Calu3 (cell line): ENCODE measurements at regions of chr3 and their contacts with region 1.

Region 1: GRCh38 chr3:189324538-189325138 is 152.9 kb downstream of the TPRG1 start:
- DNase-seq: peak; percentile 93
- H3K4me3 Mint-ChIP-seq: peak overlapping the region; percentile 22
- H3K27ac Mint-ChIP-seq: peak overlapping the region; percentile 75
- H3K4me1 Mint-ChIP-seq: peaks cover 54% of the 10 kb centered on the region
- H3K27me3 Mint-ChIP-seq: peaks cover 16% of the 10 kb centered on the region
- CTCF ChIP-seq: no peak

Region 2: DNA sequence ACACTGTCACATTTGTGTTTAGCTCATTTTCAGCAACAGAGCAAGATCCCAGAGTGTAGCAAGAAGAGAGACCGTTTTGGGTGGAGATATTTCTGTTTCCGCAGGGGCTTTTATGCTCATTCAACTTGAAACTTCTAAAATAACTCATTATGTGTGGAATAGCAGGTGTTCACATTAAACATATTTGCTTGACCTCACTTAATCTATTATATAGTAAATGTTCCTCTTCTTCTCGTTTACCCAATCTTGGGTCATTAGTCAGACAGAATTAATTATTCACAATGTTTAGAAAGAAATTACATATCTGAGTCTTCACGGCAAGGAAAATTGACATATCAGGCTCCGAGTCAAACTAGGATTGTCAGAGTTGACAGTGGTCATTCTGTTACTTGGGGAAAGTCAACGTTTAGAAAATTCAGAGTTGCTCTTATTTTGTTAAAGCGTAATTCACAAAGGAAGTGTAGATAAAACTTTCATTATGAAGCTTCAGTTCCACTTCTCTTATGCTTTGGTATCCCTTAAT is 70.0 kb after region 1 on chr3:
- CTCF ChIA-PET with region 1: no interaction called
- intact Hi-C with region 1: loop called (anchors 2 kb)
- DNase-seq: no peak
- H3K4me3 Mint-ChIP-seq: no peak overlapping the region
- H3K27ac Mint-ChIP-seq: peak overlapping the region; percentile 47
- H3K4me1 Mint-ChIP-seq: peaks cover 52% of the 10 kb centered on the region
- H3K27me3 Mint-ChIP-seq: no peaks in the 10 kb centered on the region
- CTCF ChIP-seq: no peak

Region 3: DNA sequence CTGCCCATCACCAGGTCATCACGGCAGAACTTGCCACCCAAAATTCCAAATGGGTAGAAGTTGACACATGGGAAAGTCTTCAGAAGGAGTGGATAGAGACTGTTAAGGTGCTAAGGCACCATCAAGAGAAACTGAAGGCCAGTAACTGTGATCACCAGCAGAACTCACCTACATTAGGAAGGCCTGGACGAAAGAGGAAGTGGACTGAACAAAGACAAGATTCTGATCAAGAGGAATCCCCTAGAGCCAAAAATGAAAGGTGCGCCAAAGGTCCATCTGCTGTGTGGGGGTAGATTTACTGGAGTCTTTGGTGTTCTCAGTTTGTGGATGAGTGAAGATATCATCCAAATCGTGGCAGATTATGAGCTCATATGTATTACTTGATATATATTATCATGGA is 842.3 kb after region 1 on chr3:
- CTCF ChIA-PET with region 1: no interaction called
- intact Hi-C with region 1: no loop called
- DNase-seq: no peak
- H3K4me3 Mint-ChIP-seq: no peak overlapping the region
- H3K27ac Mint-ChIP-seq: no peak overlapping the region
- H3K4me1 Mint-ChIP-seq: no peaks in the 10 kb centered on the region
- H3K27me3 Mint-ChIP-seq: no peaks in the 10 kb centered on the region
- CTCF ChIP-seq: no peak